PC-3 (cell line): ENCODE measurements at regions of chr3 and their contacts with region 1.

Region 1: DNA sequence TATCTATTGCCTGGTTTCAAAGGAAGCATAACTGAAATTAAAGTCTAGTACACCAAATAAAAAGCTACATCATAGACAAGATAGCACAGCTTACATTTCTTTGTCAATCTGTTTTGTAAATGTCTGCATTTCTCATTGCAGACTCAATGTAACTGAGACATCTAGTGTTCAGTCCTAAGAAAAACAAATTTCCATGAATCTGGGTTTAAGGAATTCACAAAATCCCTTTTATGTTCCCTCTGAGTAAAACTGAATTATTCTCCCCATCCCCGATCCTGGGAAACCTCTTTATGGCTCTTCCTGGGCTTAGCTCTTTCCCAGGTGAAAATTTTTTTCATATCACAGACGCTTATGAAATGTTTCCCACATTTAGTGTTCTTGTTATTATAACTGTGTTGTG is 21.6 kb upstream of the RASA2 start:
- DNase-seq: no peak
- ATAC-seq: peak; percentile 29; the same call in 1 of the 2 replicates
- H3K4me3 ChIP-seq: no peak overlapping the region
- H3K27ac ChIP-seq: no peak overlapping the region
- H3K4me1 ChIP-seq: no peaks in the 10 kb centered on the region
- H3K27me3 ChIP-seq: no peaks in the 10 kb centered on the region
- CTCF ChIP-seq: peak; percentile 41

Region 2: GRCh38 chr3:141570068-141570467 is 104.8 kb after region 1 on chr3:
- CTCF ChIA-PET with region 1: interaction called, 10 read pairs
- POLR2A ChIA-PET with region 1: no interaction called
- intact Hi-C with region 1: no loop called
- DNase-seq: no peak
- ATAC-seq: no peak
- H3K4me3 ChIP-seq: no peak overlapping the region
- H3K27ac ChIP-seq: no peak overlapping the region
- H3K4me1 ChIP-seq: no peaks in the 10 kb centered on the region
- H3K27me3 ChIP-seq: no peaks in the 10 kb centered on the region
- CTCF ChIP-seq: no peak

Region 3: GRCh38 chr3:141603475-141604035 is 138.3 kb after region 1 on chr3:
- CTCF ChIA-PET with region 1: no interaction called
- POLR2A ChIA-PET with region 1: no interaction called
- intact Hi-C with region 1: no loop called
- DNase-seq: no peak
- ATAC-seq: no peak
- H3K4me3 ChIP-seq: no peak overlapping the region
- H3K27ac ChIP-seq: no peak overlapping the region
- H3K4me1 ChIP-seq: no peaks in the 10 kb centered on the region
- H3K27me3 ChIP-seq: no peaks in the 10 kb centered on the region
- CTCF ChIP-seq: no peak